ENCODE measurements at regions of chr1 and their contacts with region 1.

Region 1: GRCh38 chr1:64744492-64745180 is at the start of gene RAVER2:
- DNase-seq: peak; percentile 87
- H3K4me3 ChIP-seq: peak within 1 kb of the TSS; percentile 74 to 91 (median 82)
- H3K27ac ChIP-seq: peak within 1 kb of the TSS; percentile 83 to 91 (median 90)
- H3K4me1 ChIP-seq: peaks cover 0 to 34% (median 24%) of the 10 kb centered on the region in 4 donors
- H3K27me3 ChIP-seq: no peaks in the 10 kb centered on the region
- CTCF ChIP-seq: peak in 2 of 4 experiments; percentile 20 to 46
- EP300 ChIP-seq: no peak
- POLR2A ChIP-seq: no peak
- total RNA-seq, gene RAVER2: 12.7 to 22.2 (median 17.4) TPM

Region 2: DNA sequence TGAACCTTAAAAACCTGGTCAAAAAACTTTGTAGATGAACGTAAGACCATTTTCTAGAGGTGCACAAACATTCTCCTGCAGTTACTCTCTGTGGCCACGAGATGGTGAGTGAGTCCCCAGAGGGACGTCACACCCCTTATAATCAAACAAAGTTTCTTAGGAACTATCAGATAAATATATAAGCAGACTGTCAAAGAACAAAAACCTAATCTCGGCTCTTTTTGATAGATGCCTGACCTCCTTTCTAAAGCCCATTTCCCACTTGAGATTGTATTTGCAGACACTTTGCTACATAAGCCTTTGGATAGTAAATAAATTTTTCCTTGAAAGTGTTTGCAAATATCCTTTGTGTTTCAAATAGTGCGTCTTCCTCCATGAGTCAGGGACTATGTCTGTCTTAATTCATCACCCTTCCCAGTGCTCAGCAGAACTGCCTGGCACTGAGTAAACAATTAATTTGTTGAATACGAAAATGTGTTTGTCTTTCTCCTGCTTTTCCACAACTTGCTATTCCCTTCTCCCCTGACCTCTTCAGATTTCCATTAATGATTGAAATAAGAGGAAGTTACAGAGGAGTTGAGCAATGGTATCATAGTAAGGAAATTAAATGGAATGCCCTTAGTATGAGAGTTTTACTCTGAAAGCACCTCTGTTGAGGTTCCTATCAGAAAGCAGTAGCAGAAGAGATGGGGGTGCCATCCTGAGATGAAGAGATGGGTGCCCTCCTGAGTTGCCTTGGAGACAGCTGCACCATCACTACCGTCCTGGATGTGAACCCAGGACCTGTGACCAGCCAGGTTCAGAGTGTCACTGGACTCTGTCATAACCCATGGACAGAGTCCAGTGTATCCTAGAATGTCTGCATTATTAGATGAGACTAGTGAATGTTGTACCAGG is 57.6 kb before region 1 on chr1:
- intact Hi-C with region 1: loop called (anchors 5 kb)
- DNase-seq: no peak
- H3K4me3 ChIP-seq: no peak overlapping the region
- H3K27ac ChIP-seq: no peak overlapping the region
- H3K4me1 ChIP-seq: peaks cover 0 to 23% (median 12%) of the 10 kb centered on the region in 4 donors
- H3K27me3 ChIP-seq: no peaks in the 10 kb centered on the region
- CTCF ChIP-seq: peak; percentile 46 to 83 (median 74)
- EP300 ChIP-seq: no peak
- POLR2A ChIP-seq: no peak

Measured in sigmoid colon (tissue), 7 donors.